Cardiac septum (tissue), 1 donor: ENCODE measurements at regions of chr12 and their contacts with region 1.

Region 1: DNA sequence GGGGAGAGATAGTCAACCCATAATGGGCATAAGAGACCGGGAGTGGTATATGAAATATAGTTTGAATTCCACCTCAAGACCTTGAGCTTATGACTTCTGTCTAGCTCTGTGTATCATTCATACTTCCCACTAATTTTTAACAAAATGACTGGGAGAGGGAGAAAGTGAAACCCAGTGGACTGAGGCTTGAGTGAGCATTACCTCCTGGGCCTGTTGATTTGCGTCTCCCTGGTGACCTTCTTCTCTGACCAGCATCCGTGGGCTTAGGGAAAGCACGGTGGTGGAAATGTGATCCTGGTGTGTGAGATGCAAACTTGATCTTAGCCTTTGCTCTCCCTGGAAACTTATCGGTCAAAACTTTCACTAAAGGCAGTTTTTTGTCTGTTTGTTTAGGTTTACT is 207.9 kb upstream of the BCL2L14 start:
- DNase-seq: no peak

Region 2: GRCh38 chr12:11765817-11766794 is 96.7 kb before region 1 on chr12:
- intact Hi-C with region 1: loop called (anchors 5 kb)
- DNase-seq: no peak

Region 3: DNA sequence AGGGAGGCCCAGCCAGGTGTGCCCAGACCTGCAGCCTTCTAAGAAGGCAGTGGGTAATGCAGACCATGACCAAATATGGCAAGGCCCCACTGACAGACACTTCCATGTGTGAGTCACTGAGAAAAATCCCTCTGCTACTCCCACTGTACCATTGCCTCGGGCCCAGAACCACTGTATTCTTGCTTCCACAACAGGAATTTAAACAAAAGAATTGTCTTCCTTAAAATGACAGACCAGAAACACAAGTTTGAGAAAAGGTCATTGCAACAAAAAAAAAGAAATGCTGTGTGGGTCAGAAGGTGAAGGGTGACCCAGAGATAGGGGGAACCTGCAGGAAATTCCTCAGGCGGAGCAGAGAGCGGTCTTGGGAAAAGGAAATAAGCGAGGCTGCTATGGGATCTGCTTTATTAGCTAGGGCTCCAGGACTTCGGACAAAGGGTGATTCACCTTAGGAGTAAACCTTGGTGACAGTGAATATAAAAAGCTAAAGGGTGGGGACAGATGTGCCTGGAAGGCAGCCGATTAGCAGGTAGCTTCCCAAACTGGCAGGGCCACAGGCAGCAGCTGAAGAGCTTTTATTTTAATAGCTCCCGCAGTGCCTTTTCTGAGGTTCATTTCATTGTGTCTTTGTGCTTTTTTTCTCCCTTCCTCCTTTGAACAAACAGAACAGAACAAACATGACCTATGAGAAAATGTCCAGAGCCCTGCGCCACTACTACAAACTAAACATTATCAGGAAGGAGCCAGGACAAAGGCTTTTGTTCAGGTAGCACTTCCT is 22.7 kb after region 1 on chr12:
- intact Hi-C with region 1: loop called (anchors 2 kb)
- DNase-seq: no peak

Region 4: DNA sequence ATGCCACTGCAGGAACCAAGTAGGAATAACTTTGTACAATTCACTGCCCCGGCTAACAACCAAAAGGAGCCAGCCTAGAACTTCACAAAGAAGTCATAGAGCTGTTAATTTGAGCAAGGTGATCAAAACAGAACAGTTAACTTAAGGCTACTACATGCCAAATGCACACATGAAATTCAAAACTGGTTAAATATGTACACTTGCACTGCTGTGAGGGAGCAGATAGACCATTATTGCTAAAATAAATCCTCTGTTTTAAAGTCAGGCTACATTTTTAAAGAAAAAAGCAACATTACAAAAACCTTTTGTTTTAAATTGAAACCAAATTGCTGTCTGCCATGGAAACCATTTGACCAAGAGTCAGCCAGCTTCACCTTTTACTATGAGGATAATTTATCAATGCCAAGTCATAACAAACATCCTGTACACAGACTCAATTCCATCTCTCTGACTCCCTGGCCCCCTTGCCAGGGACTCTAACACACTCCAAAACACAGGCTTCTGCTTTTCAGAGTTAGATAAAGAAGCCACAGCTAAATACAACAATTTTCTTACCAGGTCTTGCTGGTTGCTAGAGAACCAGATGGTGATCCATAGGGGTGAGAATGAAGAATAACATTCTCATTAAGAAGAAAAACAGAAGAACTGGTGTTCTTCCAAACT is 320.0 kb after region 1 on chr12:
- intact Hi-C with region 1: no loop called
- DNase-seq: no peak